ENCODE measurements at regions of chr18 and their contacts with region 1.

Region 1: GRCh38 chr18:8704361-8705279 is 736 bp upstream of the MTCL1 start:
- DNase-seq: peak; percentile 82
- ATAC-seq: peak; percentile 69
- H3K4me3 Mint-ChIP-seq: peak overlapping the region; percentile 80
- H3K27ac Mint-ChIP-seq: peak overlapping the region; percentile 68
- H3K4me1 Mint-ChIP-seq: peaks cover 47% of the 10 kb centered on the region
- H3K27me3 Mint-ChIP-seq: peaks cover 19% of the 10 kb centered on the region
- CTCF ChIP-seq: no peak

Region 2: GRCh38 chr18:8478166-8478967 is 226.3 kb before region 1 on chr18:
- CTCF ChIA-PET with region 1: no interaction called
- POLR2A ChIA-PET with region 1: no interaction called
- DNase-seq: peak; percentile 93
- ATAC-seq: peak; percentile 93
- H3K4me3 Mint-ChIP-seq: no peak overlapping the region
- H3K27ac Mint-ChIP-seq: no peak overlapping the region
- H3K4me1 Mint-ChIP-seq: peaks cover 8% of the 10 kb centered on the region; the same call in 1 of the 2 replicates
- H3K27me3 Mint-ChIP-seq: no peaks in the 10 kb centered on the region
- CTCF ChIP-seq: peak; percentile 95

Region 3: DNA sequence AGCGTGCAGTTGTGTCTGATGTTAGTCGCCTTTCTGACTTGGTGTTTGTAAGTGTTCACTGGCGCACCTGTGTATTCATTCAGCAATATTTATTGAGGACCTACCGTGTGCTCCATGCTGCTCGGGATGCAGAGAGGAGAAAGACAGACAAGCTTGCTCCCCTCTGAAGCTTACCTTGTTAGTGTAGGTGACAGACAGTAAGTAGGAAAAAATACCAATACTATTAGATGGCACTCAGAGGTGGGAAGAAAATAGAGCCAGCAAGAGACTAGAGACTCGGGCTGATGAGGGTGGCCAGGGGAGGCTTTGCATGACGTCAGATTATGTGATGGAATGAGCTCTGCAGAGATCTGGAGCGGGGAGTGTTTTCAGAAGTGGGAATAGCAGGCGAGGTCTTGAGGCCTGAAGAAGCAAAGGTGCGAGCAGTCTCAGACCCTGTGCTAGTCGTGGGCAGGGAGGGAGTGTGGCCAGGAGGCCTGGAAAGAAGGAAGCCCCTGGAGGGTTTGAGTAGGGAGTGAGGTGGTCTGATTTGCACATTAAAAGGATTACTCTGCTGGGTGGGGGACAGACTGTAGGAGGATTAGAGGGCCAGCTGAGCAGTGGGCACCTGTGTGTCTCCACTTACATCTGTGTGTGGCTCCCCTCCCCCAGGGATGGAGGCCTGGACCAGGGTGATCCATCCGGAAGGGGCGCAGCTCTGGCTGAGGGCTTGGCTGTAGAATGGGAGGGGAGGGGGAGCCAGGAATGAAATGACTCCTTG is 12.6 kb after region 1 on chr18:
- CTCF ChIA-PET with region 1: interaction called, 25 read pairs
- POLR2A ChIA-PET with region 1: interaction called, 4 read pairs
- DNase-seq: peak; percentile 71
- ATAC-seq: peak; percentile 89
- H3K4me3 Mint-ChIP-seq: peak overlapping the region; percentile 35
- H3K27ac Mint-ChIP-seq: peak overlapping the region; percentile 82
- H3K4me1 Mint-ChIP-seq: peaks cover 75% of the 10 kb centered on the region
- H3K27me3 Mint-ChIP-seq: no peaks in the 10 kb centered on the region
- CTCF ChIP-seq: no peak

Measured in WTC11 (cell line).